ENCODE measurements at regions of chr3 and their contacts with region 1.

Region 1: GRCh38 chr3:12687962-12688361 is 24.0 kb upstream of the RAF1 start:
- DNase-seq: no peak
- H3K4me3 ChIP-seq: no peak overlapping the region
- H3K27ac ChIP-seq: no peak overlapping the region
- H3K4me1 ChIP-seq: 0 out of 2 replicates have a peak, but pooled peaks cover 5% of the 10 kb centered on the region
- H3K27me3 ChIP-seq: no peaks in the 10 kb centered on the region
- CTCF ChIP-seq: no peak

Region 2: GRCh38 chr3:12643010-12643380 is 45.0 kb before region 1 on chr3:
- CTCF ChIA-PET with region 1: no interaction called
- POLR2A ChIA-PET with region 1: no interaction called
- intact Hi-C with region 1: loop called (anchors 1 kb)
- DNase-seq: no peak
- H3K4me3 ChIP-seq: no peak overlapping the region
- H3K27ac ChIP-seq: no peak overlapping the region
- H3K4me1 ChIP-seq: peaks cover 9% of the 10 kb centered on the region
- H3K27me3 ChIP-seq: no peaks in the 10 kb centered on the region
- CTCF ChIP-seq: no peak

Measured in PC-9 (cell line).